Cardiac septum (tissue), 1 donor: ENCODE measurements at regions of chr3 and their contacts with region 1.

Region 1: GRCh38 chr3:21163956-21164355 is 587.1 kb downstream of the ZNF385D start:
- DNase-seq: no peak

Region 2: GRCh38 chr3:21691036-21691435 is 527.1 kb after region 1 on chr3:
- intact Hi-C with region 1: loop called (anchors 5 kb)
- DNase-seq: no peak